Breast epithelium (tissue), 4 donors: ENCODE measurements at regions of chr5 and their contacts with region 1.

Region 1: GRCh38 chr5:27472000-27472763 is 433.8 kb upstream of the CDH9 start:
- DNase-seq: no peak
- H3K4me3 ChIP-seq: no peak overlapping the region
- H3K27ac ChIP-seq: no peak overlapping the region
- H3K4me1 ChIP-seq: no peaks in the 10 kb centered on the region
- H3K27me3 ChIP-seq: no peaks in the 10 kb centered on the region
- CTCF ChIP-seq: no peak
- POLR2A ChIP-seq: no peak

Region 2: GRCh38 chr5:26343801-26344325 is 1128.3 kb before region 1 on chr5:
- intact Hi-C with region 1: loop called (anchors 10 kb)
- DNase-seq: no peak
- H3K4me3 ChIP-seq: no peak overlapping the region
- H3K27ac ChIP-seq: no peak overlapping the region
- H3K4me1 ChIP-seq: no peaks in the 10 kb centered on the region
- H3K27me3 ChIP-seq: no peaks in the 10 kb centered on the region
- CTCF ChIP-seq: no peak
- POLR2A ChIP-seq: no peak

Region 3: GRCh38 chr5:27489701-27490100 is 17.5 kb after region 1 on chr5:
- intact Hi-C with region 1: no loop called
- DNase-seq: no peak
- H3K4me3 ChIP-seq: no peak overlapping the region
- H3K27ac ChIP-seq: no peak overlapping the region
- H3K4me1 ChIP-seq: no peaks in the 10 kb centered on the region
- H3K27me3 ChIP-seq: no peaks in the 10 kb centered on the region
- CTCF ChIP-seq: no peak
- POLR2A ChIP-seq: no peak

Region 4: GRCh38 chr5:27727254-27727653 is 255.1 kb after region 1 on chr5:
- intact Hi-C with region 1: no loop called
- DNase-seq: no peak
- H3K4me3 ChIP-seq: no peak overlapping the region
- H3K27ac ChIP-seq: no peak overlapping the region
- H3K4me1 ChIP-seq: no peaks in the 10 kb centered on the region
- H3K27me3 ChIP-seq: no peaks in the 10 kb centered on the region
- CTCF ChIP-seq: no peak
- POLR2A ChIP-seq: no peak